Left ventricle myocardium inferior (tissue), 1 donor: ENCODE measurements at regions of chr17 and their contacts with region 1.

Region 1: GRCh38 chr17:75428543-75429469 is 23.3 kb upstream of the GRB2 start:
- DNase-seq: no peak
- H3K4me3 ChIP-seq: no peak overlapping the region
- H3K27ac ChIP-seq: peak overlapping the region; percentile 18
- H3K4me1 ChIP-seq: peaks cover 12% of the 10 kb centered on the region
- H3K27me3 ChIP-seq: no peaks in the 10 kb centered on the region
- CTCF ChIP-seq: no peak

Region 2: GRCh38 chr17:75515496-75516254 is 86.9 kb after region 1 on chr17 and contains the start of gene CASKIN2:
- intact Hi-C with region 1: loop called (anchors 10 kb)
- DNase-seq: peak; percentile 98
- H3K4me3 ChIP-seq: peak within 1 kb of the TSS; percentile 95
- H3K27ac ChIP-seq: peak within 1 kb of the TSS; percentile 96
- H3K4me1 ChIP-seq: peaks cover 73% of the 10 kb centered on the region
- H3K27me3 ChIP-seq: no peaks in the 10 kb centered on the region
- CTCF ChIP-seq: peak; percentile 97
- total RNA-seq, gene CASKIN2: 34.3 TPM

Region 3: DNA sequence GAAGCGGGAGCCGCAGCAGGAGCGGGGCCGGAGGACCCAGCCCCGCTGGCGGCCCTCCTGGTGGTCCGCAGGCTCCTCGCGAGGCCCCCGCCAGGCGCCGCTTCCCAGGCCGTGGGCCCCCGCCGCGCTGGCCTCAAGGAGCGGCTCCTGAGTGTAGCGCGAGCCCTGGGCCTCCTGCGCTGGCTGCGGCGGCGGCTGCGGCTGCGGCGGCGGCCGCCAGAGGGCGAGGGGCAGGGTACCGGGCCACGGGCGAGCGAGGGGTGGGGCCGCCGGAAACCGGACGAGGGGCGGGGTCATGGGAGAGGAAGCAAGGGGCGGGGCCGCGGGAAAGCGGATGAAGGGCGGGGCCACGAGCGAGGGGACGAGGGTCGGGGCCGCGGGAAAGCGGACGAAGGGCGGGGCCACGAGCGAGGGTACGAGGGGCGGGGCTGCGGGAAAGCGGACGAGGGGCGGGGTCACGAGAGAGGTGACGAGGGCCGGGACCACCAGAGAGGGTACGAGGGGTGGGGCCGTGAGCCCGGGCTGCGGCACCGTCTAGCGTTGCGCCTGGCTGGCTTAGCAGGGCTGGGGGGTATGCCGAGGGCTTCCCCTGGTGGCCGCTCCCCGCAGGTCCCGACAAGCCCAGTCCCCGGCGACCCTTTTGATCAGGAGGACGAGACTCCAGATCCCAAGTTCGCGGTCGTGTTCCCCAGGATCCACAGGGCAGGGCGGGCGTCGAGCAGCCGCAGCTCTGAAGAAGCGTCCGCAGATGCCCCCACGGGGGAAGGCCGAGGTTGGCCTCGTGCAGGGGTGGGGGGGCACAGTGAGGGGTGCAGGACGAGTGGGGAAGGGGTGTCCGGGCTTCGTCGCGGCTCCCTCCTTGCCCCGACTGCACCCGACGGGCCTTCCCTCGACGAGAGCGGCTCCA is 160.5 kb after region 1 on chr17:
- intact Hi-C with region 1: loop called (anchors 10 kb)
- DNase-seq: peak; percentile 98
- H3K4me3 ChIP-seq: peak overlapping the region; percentile 77
- H3K27ac ChIP-seq: peak overlapping the region; percentile 95
- H3K4me1 ChIP-seq: peaks cover 35% of the 10 kb centered on the region
- H3K27me3 ChIP-seq: no peaks in the 10 kb centered on the region
- CTCF ChIP-seq: peak; percentile 79